CD8-positive, alpha-beta T cell (primary cell): ENCODE measurements at regions of chr17 and their contacts with region 1.

Region 1: DNA sequence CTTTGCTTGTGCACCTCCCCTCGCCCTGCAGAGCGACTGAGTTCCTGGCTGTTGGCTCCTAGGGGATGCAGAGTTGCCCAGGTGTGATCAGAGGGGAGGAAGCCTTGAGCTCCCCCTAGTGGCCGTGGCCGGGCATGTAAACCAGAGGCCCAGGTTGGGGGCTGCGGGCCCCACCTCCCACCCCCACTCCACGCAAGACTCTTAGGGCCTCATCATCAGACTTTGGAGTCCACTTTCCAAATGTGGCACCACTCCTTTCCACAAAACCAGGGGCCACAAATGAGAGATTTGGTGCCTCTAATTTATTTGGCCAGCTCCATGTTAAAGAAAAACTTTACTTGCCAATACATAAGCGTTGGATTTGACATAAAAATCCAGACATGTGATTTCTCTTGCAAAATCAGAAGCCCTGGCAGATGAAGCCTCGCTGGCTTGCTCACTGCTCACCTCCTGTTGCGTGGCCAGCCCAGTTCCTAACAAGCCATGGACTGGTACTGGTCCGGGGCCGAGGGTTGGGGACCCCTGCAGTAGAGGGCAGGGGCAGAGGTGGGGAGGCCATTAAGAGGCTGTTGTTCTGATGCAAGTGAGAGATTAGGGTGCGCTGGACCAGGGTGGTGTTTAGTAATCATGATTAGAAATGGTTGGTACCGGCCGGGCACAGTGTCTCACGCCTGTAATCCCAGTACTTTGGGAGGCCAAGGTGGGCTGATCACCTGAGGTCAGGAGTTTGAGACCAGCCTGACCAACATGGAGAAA is 28.7 kb upstream of the GAS7 start:
- DNase-seq: peak; percentile 13 to 77 (median 57)
- ATAC-seq: peak; percentile 46
- H3K4me3 ChIP-seq: no peak overlapping the region
- H3K4me3 Mint-ChIP-seq: no peak overlapping the region
- H3K27ac ChIP-seq: no peak overlapping the region
- H3K27ac Mint-ChIP-seq: no peak overlapping the region
- H3K4me1 ChIP-seq: no peaks in the 10 kb centered on the region
- H3K4me1 Mint-ChIP-seq: no peaks in the 10 kb centered on the region
- H3K27me3 ChIP-seq: no peaks in the 10 kb centered on the region
- H3K27me3 Mint-ChIP-seq: no peaks in the 10 kb centered on the region
- CTCF ChIP-seq: peak; percentile 72

Region 2: DNA sequence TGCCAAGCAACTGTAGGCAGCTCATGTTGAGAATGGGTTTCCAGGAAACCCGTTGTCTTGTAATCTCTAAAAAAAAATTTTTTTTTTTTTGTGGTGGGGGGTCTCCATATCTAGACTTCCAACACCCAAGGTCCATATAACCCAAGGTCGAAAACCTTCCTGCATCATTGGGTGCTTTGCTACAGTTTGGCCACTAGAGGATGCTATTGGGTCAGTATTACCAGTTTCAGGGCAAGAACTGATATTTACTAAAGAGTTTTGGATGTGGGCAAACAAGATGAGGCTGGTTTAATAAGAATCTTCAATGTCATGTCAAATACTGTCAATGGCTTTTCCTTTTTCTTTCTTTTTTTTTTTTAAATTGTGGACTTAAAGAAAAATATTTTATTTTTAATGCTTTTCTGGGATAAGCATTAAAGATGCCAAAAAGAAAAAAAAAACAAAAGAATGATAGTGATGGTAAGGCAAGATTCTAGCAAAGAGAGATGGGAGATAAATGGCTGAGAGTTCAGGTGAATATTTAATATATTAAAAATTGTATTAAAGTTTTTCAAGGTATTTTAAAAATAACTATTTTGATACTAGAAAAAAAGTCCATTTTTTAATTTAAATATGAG is 498.0 kb before region 1 on chr17:
- CTCF ChIA-PET with region 1: no interaction called
- POLR2A ChIA-PET with region 1: no interaction called
- intact Hi-C with region 1: loop called in 1 of 2 experiments (anchors 10 kb)
- DNase-seq: peak in 2 of 9 experiments; percentile 44 to 53
- ATAC-seq: no peak
- H3K4me3 ChIP-seq: no peak overlapping the region
- H3K4me3 Mint-ChIP-seq: no peak overlapping the region
- H3K27ac ChIP-seq: no peak overlapping the region
- H3K27ac Mint-ChIP-seq: no peak overlapping the region
- H3K4me1 ChIP-seq: no peaks in the 10 kb centered on the region
- H3K4me1 Mint-ChIP-seq: no peaks in the 10 kb centered on the region
- H3K27me3 ChIP-seq: no peaks in the 10 kb centered on the region
- H3K27me3 Mint-ChIP-seq: peaks cover 8% of the 10 kb centered on the region
- CTCF ChIP-seq: peak; percentile 97

Region 3: GRCh38 chr17:9924735-9925191 is 302.3 kb before region 1 on chr17:
- CTCF ChIA-PET with region 1: interaction called, 17 read pairs
- POLR2A ChIA-PET with region 1: no interaction called
- intact Hi-C with region 1: loop called in 1 of 2 experiments (anchors 1 kb)
- DNase-seq: peak in 3 of 9 experiments; percentile 11 to 67 (median 58)
- ATAC-seq: no peak
- H3K4me3 ChIP-seq: no peak overlapping the region
- H3K4me3 Mint-ChIP-seq: no peak overlapping the region
- H3K27ac ChIP-seq: no peak overlapping the region
- H3K27ac Mint-ChIP-seq: no peak overlapping the region
- H3K4me1 ChIP-seq: no peaks in the 10 kb centered on the region
- H3K4me1 Mint-ChIP-seq: peaks cover 2% of the 10 kb centered on the region
- H3K27me3 ChIP-seq: no peaks in the 10 kb centered on the region
- H3K27me3 Mint-ChIP-seq: no peaks in the 10 kb centered on the region
- CTCF ChIP-seq: peak; percentile 63

Region 4: DNA sequence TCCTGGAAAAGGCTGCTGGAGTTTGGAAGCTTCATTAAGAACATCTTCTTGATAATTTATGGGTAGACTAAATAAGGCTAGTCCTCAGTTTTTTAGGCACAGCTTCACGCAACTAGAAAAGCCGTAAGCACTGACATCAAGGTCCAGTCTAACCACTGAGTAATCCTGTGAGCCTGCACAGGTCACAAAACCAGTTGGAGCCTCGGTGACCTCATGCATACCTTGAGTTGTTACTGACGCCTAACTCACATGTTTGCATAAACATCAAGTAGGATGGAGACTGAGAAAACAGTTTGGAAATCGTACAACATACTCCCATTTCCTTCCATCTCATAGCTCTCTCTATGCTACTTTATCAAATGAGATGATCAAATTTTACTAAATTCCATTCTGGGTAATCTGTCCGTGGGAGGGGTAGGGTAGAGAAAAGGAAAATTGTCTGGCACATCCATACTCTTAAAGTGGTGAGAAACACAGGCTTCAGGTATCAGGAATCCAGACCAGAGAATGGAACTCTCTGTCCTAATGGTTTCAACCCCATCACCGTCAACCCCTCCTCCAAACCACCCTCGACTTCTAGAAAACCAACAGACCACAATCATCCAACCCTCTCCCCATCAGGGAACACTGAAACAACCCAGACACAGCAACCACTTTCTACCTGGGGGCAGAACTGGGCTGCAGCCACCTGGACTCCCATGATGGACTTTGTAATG is 258.0 kb before region 1 on chr17:
- CTCF ChIA-PET with region 1: interaction called, 38 read pairs
- POLR2A ChIA-PET with region 1: no interaction called
- intact Hi-C with region 1: loop called in 1 of 2 experiments (anchors 1 kb)
- DNase-seq: no peak
- ATAC-seq: no peak
- H3K4me3 ChIP-seq: no peak overlapping the region
- H3K4me3 Mint-ChIP-seq: no peak overlapping the region
- H3K27ac ChIP-seq: no peak overlapping the region
- H3K27ac Mint-ChIP-seq: no peak overlapping the region
- H3K4me1 ChIP-seq: no peaks in the 10 kb centered on the region
- H3K4me1 Mint-ChIP-seq: no peaks in the 10 kb centered on the region
- H3K27me3 ChIP-seq: no peaks in the 10 kb centered on the region
- H3K27me3 Mint-ChIP-seq: no peaks in the 10 kb centered on the region
- CTCF ChIP-seq: no peak

Region 5: DNA sequence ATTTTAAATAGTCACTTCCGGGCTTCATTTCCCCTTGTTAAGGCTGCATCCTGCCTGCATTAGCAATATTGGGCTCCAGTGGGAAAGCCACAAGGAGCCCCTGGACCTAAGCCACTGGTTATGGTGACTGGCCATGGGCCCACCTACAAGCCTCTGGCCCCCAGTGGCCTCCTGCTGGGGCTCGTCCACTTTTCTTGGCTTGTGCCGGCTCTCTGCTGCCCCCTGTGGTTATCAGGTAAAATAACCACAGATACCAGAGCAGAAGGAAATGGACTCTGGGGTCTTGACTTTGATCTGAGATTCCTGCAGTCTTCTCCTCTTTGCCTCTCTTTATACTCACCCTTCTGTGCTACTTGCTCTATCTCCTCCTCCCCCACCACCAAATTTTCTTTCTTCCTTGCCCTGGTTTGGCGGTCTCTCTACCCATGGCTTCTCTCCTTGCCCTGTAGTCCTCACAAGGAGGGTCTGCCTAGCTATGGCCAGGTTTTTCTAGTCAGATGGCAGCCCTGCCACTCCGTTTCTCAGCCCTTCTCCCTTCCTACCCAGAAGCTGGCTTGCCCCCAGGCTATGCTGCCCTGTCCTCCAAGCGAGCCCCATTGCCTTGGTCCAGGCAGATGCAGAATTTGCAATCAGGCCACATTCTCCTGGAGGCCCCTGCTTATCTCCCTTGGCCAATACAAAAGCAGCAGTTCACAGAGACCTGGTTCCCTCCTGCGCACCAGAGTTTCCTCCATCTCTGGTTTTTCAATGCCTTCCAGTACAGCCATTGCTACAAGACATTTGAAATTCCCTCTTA is 239.1 kb before region 1 on chr17:
- CTCF ChIA-PET with region 1: interaction called, 11 read pairs
- POLR2A ChIA-PET with region 1: no interaction called
- intact Hi-C with region 1: loop called (anchors 2 to 5 kb)
- DNase-seq: peak in 6 of 9 experiments; percentile 2 to 63 (median 44)
- ATAC-seq: no peak
- H3K4me3 ChIP-seq: no peak overlapping the region
- H3K4me3 Mint-ChIP-seq: no peak overlapping the region
- H3K27ac ChIP-seq: no peak overlapping the region
- H3K27ac Mint-ChIP-seq: no peak overlapping the region
- H3K4me1 ChIP-seq: no peaks in the 10 kb centered on the region
- H3K4me1 Mint-ChIP-seq: no peaks in the 10 kb centered on the region
- H3K27me3 ChIP-seq: no peaks in the 10 kb centered on the region
- H3K27me3 Mint-ChIP-seq: no peaks in the 10 kb centered on the region
- CTCF ChIP-seq: peak; percentile 81

Region 6: GRCh38 chr17:10115071-10115539 is 112.0 kb before region 1 on chr17:
- CTCF ChIA-PET with region 1: interaction called, 4 read pairs
- POLR2A ChIA-PET with region 1: no interaction called
- intact Hi-C with region 1: loop called in 1 of 2 experiments (anchors 2 kb)
- DNase-seq: peak; percentile 58 to 95 (median 80)
- ATAC-seq: peak; percentile 84
- H3K4me3 ChIP-seq: peak overlapping the region; percentile 44 to 47
- H3K4me3 Mint-ChIP-seq: peak overlapping the region; percentile 51
- H3K27ac ChIP-seq: peak overlapping the region; percentile 67 to 96
- H3K27ac Mint-ChIP-seq: peak overlapping the region; percentile 96
- H3K4me1 ChIP-seq: peaks cover 52% of the 10 kb centered on the region
- H3K4me1 Mint-ChIP-seq: peaks cover 76% of the 10 kb centered on the region
- H3K27me3 ChIP-seq: no peaks in the 10 kb centered on the region
- H3K27me3 Mint-ChIP-seq: no peaks in the 10 kb centered on the region
- CTCF ChIP-seq: no peak